ENCODE measurements at regions of chr1 and their contacts with region 1.

Region 1: GRCh38 chr1:209651148-209651547 is 1.1 kb downstream of the LAMB3 start:
- DNase-seq: no peak
- ATAC-seq: no peak
- H3K4me3 Mint-ChIP-seq: no peak overlapping the region
- H3K27ac Mint-ChIP-seq: peak overlapping the region; percentile 71; the same call in 1 of the 2 replicates
- H3K4me1 Mint-ChIP-seq: peaks cover 29% of the 10 kb centered on the region
- H3K27me3 Mint-ChIP-seq: peaks cover 2% of the 10 kb centered on the region; the same call in 1 of the 2 replicates
- CTCF ChIP-seq: no peak

Region 2: DNA sequence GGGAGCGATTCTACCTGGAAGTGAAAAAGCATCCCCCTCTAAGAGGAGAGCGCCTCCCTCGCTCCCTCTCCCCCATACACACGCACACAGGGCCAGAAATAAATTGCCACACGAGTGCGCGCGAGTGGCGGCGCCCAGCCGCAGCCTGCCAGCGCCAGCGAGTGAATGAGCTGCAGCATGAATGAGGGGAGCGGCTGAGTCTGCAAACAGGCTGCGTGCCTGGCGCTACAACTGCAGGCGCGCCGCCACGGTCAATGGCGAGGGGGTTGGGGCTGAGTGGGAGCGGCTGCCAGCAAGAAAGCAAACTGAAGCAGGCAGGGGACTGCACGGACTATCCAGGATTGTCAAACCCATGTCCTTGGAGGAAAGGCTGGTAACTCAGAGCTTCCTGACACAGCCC is 65.5 kb before region 1 on chr1:
- CTCF ChIA-PET with region 1: interaction called, 12 read pairs
- POLR2A ChIA-PET with region 1: no interaction called
- DNase-seq: peak; percentile 49
- ATAC-seq: peak; percentile 51
- H3K4me3 Mint-ChIP-seq: no peak overlapping the region
- H3K27ac Mint-ChIP-seq: no peak overlapping the region
- H3K4me1 Mint-ChIP-seq: no peaks in the 10 kb centered on the region; the same call in 1 of the 2 replicates
- H3K27me3 Mint-ChIP-seq: no peaks in the 10 kb centered on the region; the same call in 1 of the 2 replicates
- CTCF ChIP-seq: no peak

Region 3: GRCh38 chr1:209662879-209663327 is 11.8 kb after region 1 on chr1:
- CTCF ChIA-PET with region 1: no interaction called
- POLR2A ChIA-PET with region 1: no interaction called
- DNase-seq: no peak
- ATAC-seq: no peak
- H3K4me3 Mint-ChIP-seq: no peak overlapping the region
- H3K27ac Mint-ChIP-seq: no peak overlapping the region
- H3K4me1 Mint-ChIP-seq: peaks cover 6% of the 10 kb centered on the region; the same call in 1 of the 2 replicates
- H3K27me3 Mint-ChIP-seq: no peaks in the 10 kb centered on the region
- CTCF ChIP-seq: no peak

Region 4: GRCh38 chr1:209674957-209675564 is 23.9 kb after region 1 on chr1 and contains the start of gene G0S2:
- CTCF ChIA-PET with region 1: interaction called, 10 read pairs
- POLR2A ChIA-PET with region 1: interaction called, 6 read pairs
- DNase-seq: peak; percentile 63
- ATAC-seq: peak; percentile 67
- H3K4me3 Mint-ChIP-seq: peak within 1 kb of the TSS; percentile 76
- H3K27ac Mint-ChIP-seq: no peak within 1 kb of the TSS
- H3K4me1 Mint-ChIP-seq: peaks cover 18% of the 10 kb centered on the region
- H3K27me3 Mint-ChIP-seq: peaks cover 71% of the 10 kb centered on the region
- CTCF ChIP-seq: no peak
- total RNA-seq, gene G0S2: 0.57 to 0.92 TPM (median 0.81 TPM) in 3 replicates

Measured in WTC11 (cell line).